Uterus (tissue), 4 donors: ENCODE measurements at regions of chr1 and their contacts with region 1.

Region 1: GRCh38 chr1:183281553-183282091 is 95.6 kb downstream of the LAMC2 start:
- DNase-seq: peak; percentile 93 to 96
- H3K4me3 ChIP-seq: no peak overlapping the region
- H3K27ac ChIP-seq: peak overlapping the region; percentile 77 to 82
- H3K4me1 ChIP-seq: peaks cover 0 to 3% of the 10 kb centered on the region in 2 donors
- H3K27me3 ChIP-seq: no peaks in the 10 kb centered on the region
- CTCF ChIP-seq: peak; percentile 90 to 94 (median 93)
- POLR2A ChIP-seq: peak in 1 of 2 donors; percentile 16

Region 2: GRCh38 chr1:183318433-183318832 is 36.8 kb after region 1 on chr1:
- intact Hi-C with region 1: loop called (anchors 5 kb)
- DNase-seq: peak; percentile 85 to 93
- H3K4me3 ChIP-seq: no peak overlapping the region
- H3K27ac ChIP-seq: peak overlapping the region; percentile 87 to 89
- H3K4me1 ChIP-seq: peaks cover 0 to 4% of the 10 kb centered on the region in 2 donors
- H3K27me3 ChIP-seq: no peaks in the 10 kb centered on the region
- CTCF ChIP-seq: peak; percentile 82 to 91 (median 82)
- POLR2A ChIP-seq: no peak

Region 3: DNA sequence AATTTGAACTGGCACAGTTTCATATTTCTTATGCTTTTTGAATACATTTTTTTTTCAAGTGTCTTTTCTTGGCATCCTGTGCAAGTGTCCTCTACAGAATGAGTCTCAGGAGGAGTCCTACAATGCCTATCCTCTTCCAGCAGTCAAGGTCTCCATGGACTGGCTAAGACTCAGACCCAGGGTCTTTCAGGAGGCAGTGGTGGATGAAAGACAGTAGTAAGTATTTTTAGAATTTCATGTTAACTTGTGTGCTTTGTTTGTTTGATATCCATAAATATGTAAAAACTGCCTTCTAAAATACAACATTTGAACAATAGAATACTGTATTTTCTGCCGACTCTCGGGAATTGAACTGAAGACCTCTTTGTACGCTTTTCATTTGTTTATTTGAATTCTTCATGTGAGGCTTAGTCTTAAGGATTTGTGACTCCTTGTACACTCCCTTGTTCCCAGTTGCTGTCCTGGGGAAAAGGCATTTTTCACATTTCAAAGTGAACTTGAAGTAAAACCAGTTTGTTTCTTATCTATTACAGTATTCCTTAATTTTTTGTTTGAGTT is 252.1 kb after region 1 on chr1:
- intact Hi-C with region 1: no loop called
- DNase-seq: no peak
- H3K4me3 ChIP-seq: no peak overlapping the region
- H3K27ac ChIP-seq: no peak overlapping the region
- H3K4me1 ChIP-seq: no peaks in the 10 kb centered on the region
- H3K27me3 ChIP-seq: no peaks in the 10 kb centered on the region
- CTCF ChIP-seq: no peak
- POLR2A ChIP-seq: no peak